ENCODE measurements at regions of chr12 and their contacts with region 1.

Region 1: GRCh38 chr12:78934671-78935070 is 70.1 kb downstream of the SYT1 start:
- DNase-seq: no peak
- H3K4me3 ChIP-seq: no peak overlapping the region
- H3K27ac ChIP-seq: no peak overlapping the region
- H3K4me1 ChIP-seq: no peaks in the 10 kb centered on the region
- CTCF ChIP-seq: no peak

Region 2: DNA sequence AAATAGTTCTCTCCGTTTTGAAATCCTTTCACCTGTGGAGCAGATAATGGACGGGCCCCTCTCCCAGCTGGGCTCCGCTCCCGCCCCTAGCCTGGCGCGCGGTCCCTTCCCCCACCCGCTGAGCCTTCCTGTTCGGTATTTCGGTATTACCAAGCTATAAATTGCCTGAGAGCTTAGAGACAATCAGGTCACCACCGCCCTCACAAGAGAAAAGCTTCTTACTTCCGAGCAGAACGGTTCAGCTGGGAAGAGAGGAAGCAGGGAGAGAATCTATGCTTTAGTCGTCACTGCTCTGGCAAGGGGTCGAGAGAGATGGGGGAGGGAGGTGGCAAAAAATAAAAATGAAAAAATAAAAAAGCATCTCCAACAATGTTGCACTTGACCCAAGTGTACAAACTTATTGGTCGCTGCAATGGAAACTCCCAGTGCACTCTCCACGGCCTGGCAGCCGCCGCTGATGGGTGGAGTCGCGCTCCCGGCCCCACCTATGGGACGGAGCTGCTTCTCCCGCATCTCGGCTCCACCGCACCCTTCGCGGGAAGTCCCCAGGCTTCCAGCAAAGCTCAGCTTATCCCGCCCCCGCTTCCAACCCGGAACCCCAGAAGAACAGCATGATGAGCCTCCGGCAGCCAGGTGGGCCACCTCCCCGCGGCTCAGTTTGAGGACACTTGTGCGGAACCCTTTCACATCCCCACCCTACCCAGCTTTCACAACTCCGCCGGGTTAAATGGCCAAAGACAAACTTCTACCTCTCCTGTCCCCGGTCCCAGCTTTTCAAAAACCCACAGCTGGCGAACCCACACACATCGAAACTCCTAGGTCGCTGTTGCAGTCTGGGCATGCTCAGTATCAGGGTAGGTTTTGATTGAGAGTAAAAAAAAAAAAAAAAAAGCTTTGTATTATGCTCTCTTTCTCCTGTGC is 70.9 kb before region 1 on chr12:
- CTCF ChIA-PET with region 1: no interaction called
- POLR2A ChIA-PET with region 1: no interaction called
- intact Hi-C with region 1: loop called (anchors 2 kb)
- DNase-seq: no peak
- H3K4me3 ChIP-seq: no peak overlapping the region
- H3K27ac ChIP-seq: no peak overlapping the region
- H3K4me1 ChIP-seq: no peaks in the 10 kb centered on the region
- CTCF ChIP-seq: no peak